PC-3 (cell line): ENCODE measurements at regions of chr6 and their contacts with region 1.

Region 1: GRCh38 chr6:111812060-111813038 is 60.9 kb downstream of the FYN start:
- DNase-seq: peak; percentile 77
- ATAC-seq: peak; percentile 77
- H3K4me3 ChIP-seq: peak overlapping the region; percentile 37; the same call in 1 of the 2 replicates
- H3K27ac ChIP-seq: peak overlapping the region; percentile 91
- H3K4me1 ChIP-seq: peaks cover 40% of the 10 kb centered on the region
- H3K27me3 ChIP-seq: no peaks in the 10 kb centered on the region
- CTCF ChIP-seq: no peak

Region 2: GRCh38 chr6:111377558-111378120 is 434.7 kb before region 1 on chr6:
- CTCF ChIA-PET with region 1: no interaction called
- POLR2A ChIA-PET with region 1: no interaction called
- intact Hi-C with region 1: no loop called
- DNase-seq: no peak
- ATAC-seq: no peak
- H3K4me3 ChIP-seq: no peak overlapping the region
- H3K27ac ChIP-seq: no peak overlapping the region
- H3K4me1 ChIP-seq: peaks cover 12% of the 10 kb centered on the region
- H3K27me3 ChIP-seq: no peaks in the 10 kb centered on the region
- CTCF ChIP-seq: no peak

Region 3: DNA sequence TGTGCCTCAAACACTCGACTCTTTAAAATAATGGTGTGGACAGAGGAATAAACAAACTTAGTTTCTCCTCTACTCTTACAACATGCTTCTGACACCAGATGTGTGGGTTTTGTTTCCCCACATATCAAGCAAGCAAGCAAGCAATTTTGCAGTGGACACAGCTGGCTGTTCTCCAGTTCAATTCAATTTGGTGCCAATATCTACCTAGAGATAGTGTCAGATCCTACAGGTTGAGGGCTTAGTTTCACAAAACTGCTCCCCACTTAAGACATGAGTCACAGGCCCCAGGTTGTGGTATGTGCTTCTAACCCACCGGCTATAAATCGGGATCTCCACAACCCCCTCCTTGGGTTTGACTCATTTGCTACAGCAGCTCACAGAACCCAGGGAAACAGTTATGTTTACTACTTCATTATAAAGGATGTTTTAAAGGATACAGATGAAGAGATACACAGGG is 75.3 kb before region 1 on chr6:
- CTCF ChIA-PET with region 1: no interaction called
- POLR2A ChIA-PET with region 1: no interaction called
- intact Hi-C with region 1: no loop called
- DNase-seq: peak; percentile 15
- ATAC-seq: no peak
- H3K4me3 ChIP-seq: no peak overlapping the region
- H3K27ac ChIP-seq: no peak overlapping the region
- H3K4me1 ChIP-seq: no peaks in the 10 kb centered on the region
- H3K27me3 ChIP-seq: no peaks in the 10 kb centered on the region
- CTCF ChIP-seq: no peak

Region 4: DNA sequence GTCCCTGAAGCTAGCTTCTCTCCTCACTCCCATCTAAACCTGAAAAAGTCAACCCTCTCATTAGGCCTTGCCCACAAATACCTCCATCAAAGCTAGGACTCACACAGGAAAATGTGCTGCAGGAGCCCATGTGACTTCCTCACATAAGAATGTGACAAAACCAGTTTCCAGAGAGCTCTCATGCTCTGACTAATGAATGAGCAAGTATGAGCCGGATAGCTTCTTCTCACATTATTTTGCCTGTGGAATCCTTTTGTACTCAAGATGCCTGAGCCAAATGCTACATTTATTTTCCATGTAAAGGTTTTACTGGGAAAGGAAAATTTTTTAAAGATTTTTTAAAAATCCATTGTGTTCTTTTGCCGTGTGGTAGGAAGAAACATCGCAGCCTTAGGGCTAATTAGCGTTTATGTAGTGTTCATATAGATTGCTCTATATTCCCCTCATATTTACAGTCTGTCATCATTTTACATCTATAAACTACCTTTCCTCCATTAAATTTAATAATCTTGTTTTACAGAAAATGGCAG is 172.9 kb after region 1 on chr6:
- CTCF ChIA-PET with region 1: no interaction called
- POLR2A ChIA-PET with region 1: no interaction called
- intact Hi-C with region 1: loop called (anchors 1 kb)
- DNase-seq: peak; percentile 96
- ATAC-seq: peak; percentile 95
- H3K4me3 ChIP-seq: no peak overlapping the region
- H3K27ac ChIP-seq: peak overlapping the region; percentile 88
- H3K4me1 ChIP-seq: peaks cover 37% of the 10 kb centered on the region
- H3K27me3 ChIP-seq: no peaks in the 10 kb centered on the region
- CTCF ChIP-seq: no peak

Region 5: GRCh38 chr6:111997078-111997852 is 184.9 kb after region 1 on chr6:
- CTCF ChIA-PET with region 1: no interaction called
- POLR2A ChIA-PET with region 1: no interaction called
- intact Hi-C with region 1: loop called (anchors 5 kb)
- DNase-seq: peak; percentile 76
- ATAC-seq: peak; percentile 87
- H3K4me3 ChIP-seq: peak overlapping the region; percentile 21; the same call in 1 of the 2 replicates
- H3K27ac ChIP-seq: no peak overlapping the region
- H3K4me1 ChIP-seq: peaks cover 24% of the 10 kb centered on the region
- H3K27me3 ChIP-seq: no peaks in the 10 kb centered on the region
- CTCF ChIP-seq: peak; percentile 82